Activated CD4-positive, alpha-beta T cell treated with anti-CD3 and anti-CD28 coated beads, Interleukin-2, amount 10 ng/mL, durations not matched to agents 24 days and 14 days (primary cell): ENCODE measurements at regions of chr22 and their contacts with region 1.

Region 1: GRCh38 chr22:36977947-36978660 is 41.1 kb downstream of the TST start:
- DNase-seq: peak; percentile 97
- H3K4me3 Mint-ChIP-seq: peak overlapping the region; percentile 84
- H3K27ac Mint-ChIP-seq: peak overlapping the region; percentile 8
- H3K4me1 Mint-ChIP-seq: peaks cover 9% of the 10 kb centered on the region
- H3K27me3 Mint-ChIP-seq: peaks cover 8% of the 10 kb centered on the region

Region 2: GRCh38 chr22:36546092-36546804 is 431.9 kb before region 1 on chr22:
- intact Hi-C with region 1: loop called (anchors 5 kb)
- DNase-seq: peak; percentile 80
- H3K4me3 Mint-ChIP-seq: no peak overlapping the region
- H3K27ac Mint-ChIP-seq: no peak overlapping the region
- H3K4me1 Mint-ChIP-seq: peaks cover 32% of the 10 kb centered on the region
- H3K27me3 Mint-ChIP-seq: peaks cover 5% of the 10 kb centered on the region

Region 3: DNA sequence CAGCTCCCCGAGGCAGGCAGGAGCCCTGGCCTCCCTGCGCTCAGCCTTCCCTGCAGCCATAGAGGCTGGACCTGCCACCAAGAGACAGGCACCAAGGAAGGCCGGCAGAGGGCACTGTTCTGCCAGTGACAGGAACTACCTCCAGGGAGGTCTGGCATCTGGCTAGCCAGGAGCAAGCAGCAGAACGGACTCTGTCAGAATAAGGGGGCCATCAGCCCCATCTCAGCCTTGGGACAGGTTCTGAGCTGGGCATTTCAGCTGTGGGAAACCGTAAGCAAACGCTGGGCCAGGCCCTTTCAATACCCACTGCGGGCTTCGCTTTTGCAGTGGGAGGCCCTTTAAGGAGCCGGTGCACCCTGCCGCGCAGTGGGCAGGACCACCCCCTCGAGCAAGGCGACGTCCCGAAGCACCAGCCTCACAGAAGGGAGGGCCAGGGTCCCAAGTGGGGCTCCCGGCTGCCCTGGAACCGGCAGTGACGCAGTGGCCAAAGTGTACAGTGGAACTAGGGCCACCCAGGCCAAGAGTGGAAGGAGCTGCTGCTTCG is 220.4 kb before region 1 on chr22:
- intact Hi-C with region 1: loop called (anchors 2 kb)
- DNase-seq: peak; percentile 93
- H3K4me3 Mint-ChIP-seq: no peak overlapping the region
- H3K27ac Mint-ChIP-seq: no peak overlapping the region
- H3K4me1 Mint-ChIP-seq: no peaks in the 10 kb centered on the region
- H3K27me3 Mint-ChIP-seq: peaks cover 4% of the 10 kb centered on the region

Region 4: GRCh38 chr22:36781656-36782627 is 196.2 kb before region 1 on chr22:
- intact Hi-C with region 1: loop called (anchors 1 kb)
- DNase-seq: peak; percentile 97
- H3K4me3 Mint-ChIP-seq: peak overlapping the region; percentile 63
- H3K27ac Mint-ChIP-seq: peak overlapping the region; percentile 95
- H3K4me1 Mint-ChIP-seq: peaks cover 27% of the 10 kb centered on the region
- H3K27me3 Mint-ChIP-seq: peaks cover 1% of the 10 kb centered on the region

Region 5: GRCh38 chr22:36856121-36856791 is 121.8 kb before region 1 on chr22:
- intact Hi-C with region 1: loop called (anchors 1 kb)
- DNase-seq: peak; percentile 99
- H3K4me3 Mint-ChIP-seq: peak overlapping the region; percentile 70
- H3K27ac Mint-ChIP-seq: peak overlapping the region; percentile 57
- H3K4me1 Mint-ChIP-seq: peaks cover 42% of the 10 kb centered on the region
- H3K27me3 Mint-ChIP-seq: no peaks in the 10 kb centered on the region

Region 6: DNA sequence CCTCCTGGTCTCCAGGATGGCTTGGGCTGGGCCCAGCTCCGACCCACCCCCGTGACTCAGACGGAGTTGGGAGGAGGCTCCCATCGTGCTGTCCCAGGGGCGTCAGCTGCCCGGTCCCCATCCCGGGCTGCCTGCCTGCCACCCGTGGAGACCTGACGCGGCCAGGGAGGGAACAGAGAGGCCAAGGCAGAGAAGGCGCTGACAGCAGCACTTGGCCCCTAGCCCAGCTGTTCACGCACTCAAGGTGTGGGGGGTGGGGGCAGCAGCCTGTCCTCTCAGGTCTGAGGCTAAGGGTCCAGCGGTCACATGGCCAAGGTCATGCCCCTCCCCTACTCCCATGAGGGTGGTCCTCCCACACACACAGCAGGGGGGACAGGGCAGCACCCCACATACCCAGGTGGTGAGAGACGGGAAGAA is 400.5 kb after region 1 on chr22:
- intact Hi-C with region 1: no loop called
- DNase-seq: no peak
- H3K4me3 Mint-ChIP-seq: no peak overlapping the region
- H3K27ac Mint-ChIP-seq: no peak overlapping the region
- H3K4me1 Mint-ChIP-seq: no peaks in the 10 kb centered on the region
- H3K27me3 Mint-ChIP-seq: peaks cover 7% of the 10 kb centered on the region